IMR-90 (cell line): ENCODE measurements at regions of chr11 and their contacts with region 1.

Region 1: DNA sequence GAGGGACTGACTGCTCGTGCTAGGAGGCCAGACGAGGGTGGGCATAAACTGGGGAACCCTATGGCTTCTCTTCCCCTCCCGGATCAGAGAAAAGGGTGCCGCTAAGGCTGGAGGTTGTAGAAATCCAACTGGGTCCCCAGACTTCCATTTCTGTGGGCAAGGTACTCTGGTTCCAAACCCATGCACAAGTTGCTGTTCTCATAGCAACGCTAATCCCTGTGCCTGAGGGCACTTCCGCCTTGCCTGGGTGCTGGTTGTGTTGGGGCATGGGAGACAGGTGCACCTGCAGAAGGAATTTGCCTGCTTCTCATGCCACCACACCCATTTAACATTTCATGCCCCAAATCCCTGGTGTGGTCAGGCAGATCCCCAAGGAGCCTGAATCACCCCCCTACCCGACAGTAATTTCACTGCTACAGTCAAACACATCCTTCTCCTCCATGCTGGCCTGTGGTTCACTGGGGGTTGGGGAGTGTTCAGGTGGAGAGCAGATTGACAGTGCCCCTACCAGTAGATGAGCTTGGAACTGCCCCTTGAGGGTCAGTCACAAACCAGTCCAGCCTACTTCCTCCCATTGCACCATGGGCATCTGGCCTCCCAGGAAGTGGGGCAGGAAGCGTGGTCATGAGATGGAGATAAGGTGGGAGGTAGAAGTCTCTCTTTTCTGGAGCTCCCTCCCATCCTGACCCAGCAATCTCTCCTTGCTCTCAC is 1.2 kb downstream of the C2CD2L start:
- DNase-seq: peak; percentile 27
- ATAC-seq: no peak
- H3K4me3 ChIP-seq: peak overlapping the region; percentile 45
- H3K27ac ChIP-seq: peak overlapping the region; percentile 36; the same call in 1 of the 2 replicates
- H3K4me1 ChIP-seq: peaks cover 9% of the 10 kb centered on the region
- H3K27me3 ChIP-seq: no peaks in the 10 kb centered on the region
- CTCF ChIP-seq: no peak
- POLR2A ChIP-seq: no peak
- RAD21 ChIP-seq: no peak

Region 2: DNA sequence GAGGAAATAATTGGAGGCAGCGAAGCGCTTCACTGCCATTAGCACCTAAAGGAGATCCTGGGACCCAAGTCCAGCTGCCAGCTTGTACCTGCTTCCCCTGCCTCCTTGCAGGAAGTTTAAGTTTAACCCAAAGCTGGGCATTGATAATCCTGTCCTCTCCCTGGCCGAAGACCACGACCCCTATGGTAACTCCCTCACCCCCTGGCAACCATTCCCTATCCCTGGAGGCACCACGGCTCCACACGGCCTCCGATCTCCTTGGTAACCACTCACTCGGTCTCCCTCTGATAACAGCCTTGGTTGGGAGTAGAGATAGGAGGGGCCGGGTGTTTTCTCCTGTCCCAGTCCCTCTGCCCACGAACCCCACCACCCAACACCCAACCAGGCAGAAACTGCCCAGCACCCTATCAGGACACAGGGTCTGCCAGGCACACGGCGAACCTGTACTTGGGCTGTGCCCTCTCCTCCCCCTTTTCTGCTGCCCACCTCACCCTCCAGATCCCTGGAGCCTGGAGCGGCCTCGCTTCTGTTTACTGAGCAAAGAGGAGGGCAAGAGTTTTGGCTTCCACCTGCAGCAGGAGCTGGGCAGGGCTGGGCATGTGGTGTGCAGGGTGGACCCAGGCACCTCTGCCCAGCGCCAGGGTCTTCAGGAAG is 77.8 kb after region 1 on chr11:
- CTCF ChIA-PET with region 1: no interaction called
- POLR2A ChIA-PET with region 1: interaction called, 18 read pairs
- dilution Hi-C with region 1: no loop called
- in situ Hi-C with region 1: no loop called
- intact Hi-C with region 1: no loop called
- DNase-seq: no peak
- ATAC-seq: no peak
- H3K4me3 ChIP-seq: no peak overlapping the region
- H3K27ac ChIP-seq: no peak overlapping the region
- H3K4me1 ChIP-seq: no peaks in the 10 kb centered on the region
- H3K27me3 ChIP-seq: peaks cover 28% of the 10 kb centered on the region
- CTCF ChIP-seq: no peak
- POLR2A ChIP-seq: no peak
- RAD21 ChIP-seq: no peak